GM10248 (cell line): ENCODE measurements at regions of chr16 and their contacts with region 1.

Region 1: GRCh38 chr16:67883872-67884261 is 818 bp upstream of the NRN1L start:
- DNase-seq: peak; percentile 85
- CTCF ChIP-seq: peak; percentile 88

Region 2: GRCh38 chr16:67441271-67441753 is 442.6 kb before region 1 on chr16:
- CTCF ChIA-PET with region 1: no interaction called
- POLR2A ChIA-PET with region 1: no interaction called
- DNase-seq: no peak
- CTCF ChIP-seq: no peak

Region 3: GRCh38 chr16:67672739-67673662 is 210.9 kb before region 1 on chr16:
- CTCF ChIA-PET with region 1: interaction called, 10 read pairs
- POLR2A ChIA-PET with region 1: no interaction called
- DNase-seq: peak; percentile 84
- CTCF ChIP-seq: peak; percentile 80

Region 4: DNA sequence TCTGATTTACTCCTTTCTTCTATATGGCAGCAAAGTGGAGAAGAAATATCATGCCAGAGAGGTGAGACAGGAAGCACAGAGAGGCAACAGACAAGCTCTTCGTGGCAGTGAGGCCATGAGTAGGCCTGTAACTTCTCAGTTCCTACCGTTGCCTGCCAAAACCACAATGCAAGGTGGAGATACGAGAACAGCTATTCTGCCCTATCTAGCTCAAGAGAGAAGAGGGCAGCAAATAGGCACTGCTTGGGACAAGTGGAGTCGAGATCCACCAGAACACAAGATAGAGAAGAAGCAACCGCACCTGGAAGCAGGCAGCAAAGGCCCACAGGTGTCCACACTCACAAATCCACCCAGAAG is 102.3 kb before region 1 on chr16:
- CTCF ChIA-PET with region 1: no interaction called
- POLR2A ChIA-PET with region 1: no interaction called
- DNase-seq: peak; percentile 46
- CTCF ChIP-seq: no peak

Region 5: GRCh38 chr16:67872786-67873537 is 10.9 kb before region 1 on chr16 and contains the start of gene EDC4:
- CTCF ChIA-PET with region 1: interaction called, 29 read pairs
- POLR2A ChIA-PET with region 1: no interaction called
- DNase-seq: peak; percentile 96
- CTCF ChIP-seq: no peak

Region 6: GRCh38 chr16:67910158-67910557 is 26.3 kb after region 1 on chr16:
- CTCF ChIA-PET with region 1: interaction called, 20 read pairs
- POLR2A ChIA-PET with region 1: no interaction called
- DNase-seq: no peak
- CTCF ChIP-seq: no peak

Region 7: DNA sequence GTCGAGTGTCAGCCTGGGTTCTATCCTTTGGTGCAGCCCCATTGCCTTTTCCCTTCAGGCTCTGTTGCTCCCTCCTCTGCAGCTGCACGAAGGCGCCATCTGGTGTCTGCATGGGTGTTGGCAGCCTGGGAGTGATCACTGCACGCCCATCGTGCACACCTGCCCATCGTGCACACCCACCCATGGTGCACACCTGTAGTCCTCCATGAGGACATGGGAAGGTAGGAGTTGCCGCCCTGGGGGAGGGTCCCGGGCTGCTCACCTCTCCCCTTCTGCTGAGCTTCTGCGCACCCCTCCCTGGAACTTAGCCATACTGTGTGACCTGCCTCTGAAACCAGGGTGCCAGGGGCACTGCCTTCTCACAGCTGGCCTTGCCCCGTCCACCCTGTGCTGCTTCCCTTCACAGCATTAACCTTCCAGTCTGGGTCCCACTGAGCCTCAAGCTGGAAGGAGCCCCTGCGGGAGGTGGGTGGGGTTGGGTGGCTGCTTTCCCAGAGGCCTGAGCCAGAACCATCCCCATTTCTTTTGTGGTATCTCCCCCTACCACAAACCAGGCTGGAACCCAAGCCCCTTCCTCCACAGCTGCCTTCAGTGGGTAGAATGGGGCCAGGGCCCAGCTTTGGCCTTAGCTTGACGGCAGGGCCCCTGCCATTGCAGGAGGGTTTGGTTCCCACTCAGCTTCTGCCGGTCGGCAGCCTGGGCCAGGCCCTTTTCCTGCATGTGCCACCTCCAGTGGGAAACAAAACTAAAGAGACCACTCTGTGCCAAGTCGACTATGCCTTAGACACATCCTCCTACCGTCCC is 44.9 kb after region 1 on chr16:
- CTCF ChIA-PET with region 1: interaction called, 54 read pairs
- POLR2A ChIA-PET with region 1: no interaction called
- DNase-seq: peak; percentile 89
- CTCF ChIP-seq: peak; percentile 97

Region 8: GRCh38 chr16:68022704-68023522 is 139.0 kb after region 1 on chr16 and contains the starts of genes DDX28 and DUS2:
- CTCF ChIA-PET with region 1: interaction called, 13 read pairs
- POLR2A ChIA-PET with region 1: no interaction called
- DNase-seq: peak; percentile 92
- CTCF ChIP-seq: peak; percentile 17

Region 9: DNA sequence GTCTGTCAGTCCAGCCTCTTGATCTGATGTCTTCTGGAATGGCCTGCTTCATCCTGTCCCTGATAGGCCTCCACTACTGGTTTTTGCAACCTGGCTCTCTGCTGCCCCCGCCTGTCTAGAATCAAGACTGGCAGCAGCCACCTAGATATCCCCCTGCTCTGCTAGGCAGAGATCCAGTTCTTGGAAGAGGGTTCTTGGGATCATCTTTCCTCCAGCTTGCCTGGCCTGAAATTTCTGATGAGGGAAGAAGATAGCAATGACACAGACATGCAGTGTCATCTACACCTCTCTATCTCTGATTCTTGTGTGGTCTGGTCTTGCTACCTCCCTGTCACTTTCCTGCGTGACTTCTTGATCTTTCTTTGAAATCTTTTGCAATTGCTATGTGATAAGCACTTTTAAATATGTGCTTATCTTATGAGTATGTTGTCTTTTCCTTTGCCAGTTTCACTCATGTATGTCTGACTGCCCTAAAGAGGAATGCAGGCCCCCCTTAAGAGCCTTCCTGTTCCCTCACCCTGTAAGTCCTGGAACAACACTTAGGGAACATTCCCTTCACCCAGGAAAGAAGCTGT is 181.0 kb after region 1 on chr16:
- CTCF ChIA-PET with region 1: interaction called, 21 read pairs
- POLR2A ChIA-PET with region 1: no interaction called
- DNase-seq: peak; percentile 67
- CTCF ChIP-seq: peak; percentile 78